Activated CD4-positive, alpha-beta T cell treated with anti-CD3 and anti-CD28 coated beads for 36 hours (primary cell): ENCODE measurements at regions of chr22 and their contacts with region 1.

Region 1: DNA sequence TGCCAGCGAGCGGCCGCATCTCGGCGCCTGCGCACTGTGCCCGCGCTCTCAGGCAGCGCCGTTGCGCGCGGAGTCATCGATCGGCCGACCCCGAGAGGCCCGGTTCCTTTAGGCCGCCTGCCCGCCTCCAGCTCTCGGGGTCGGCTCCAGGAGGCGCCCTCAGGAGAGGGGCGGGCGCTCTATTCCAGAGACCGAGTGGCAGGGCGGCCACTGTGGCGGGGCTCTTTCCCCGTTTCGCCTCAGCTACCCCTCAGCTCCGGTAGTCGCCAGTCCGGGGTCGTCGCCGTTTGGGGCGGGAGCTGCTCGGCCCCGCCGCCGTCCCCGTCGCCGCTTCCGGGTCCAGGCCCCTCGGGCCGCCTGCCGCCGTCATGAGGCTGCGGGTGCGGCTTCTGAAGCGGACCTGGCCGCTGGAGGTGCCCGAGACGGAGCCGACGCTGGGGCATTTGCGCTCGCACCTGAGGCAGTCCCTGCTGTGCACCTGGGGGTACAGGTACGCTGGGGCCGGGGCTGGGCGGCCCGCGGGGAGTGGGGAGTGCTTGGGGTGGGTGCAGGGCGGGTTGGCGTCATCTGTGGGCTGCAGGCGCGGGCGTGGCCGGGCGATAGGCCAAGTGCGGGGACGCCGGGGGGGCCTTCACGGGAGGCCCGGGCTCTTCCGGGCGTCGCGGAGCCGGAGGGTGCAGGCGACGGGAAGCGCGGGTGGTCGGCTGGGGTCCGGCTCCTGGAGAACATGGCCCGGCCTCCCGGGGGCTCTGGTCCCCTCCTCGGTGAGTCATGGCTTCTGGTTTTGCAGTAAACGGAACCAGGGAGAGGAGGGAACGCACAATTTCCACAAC is at the start of gene FBXO7:
- DNase-seq: peak; percentile 93
- ATAC-seq: peak; percentile 83
- H3K4me3 Mint-ChIP-seq: peak within 1 kb of the TSS; percentile 90
- H3K27ac Mint-ChIP-seq: peak within 1 kb of the TSS; percentile 98
- H3K4me1 Mint-ChIP-seq: peaks cover 21% of the 10 kb centered on the region
- H3K27me3 Mint-ChIP-seq: no peaks in the 10 kb centered on the region
- total RNA-seq, gene FBXO7: 81.3 to 85.6 TPM

Region 2: GRCh38 chr22:31943976-31944699 is 530.7 kb before region 1 on chr22 and contains the start of gene YWHAH:
- CTCF ChIA-PET with region 1: no interaction called
- POLR2A ChIA-PET with region 1: no interaction called
- intact Hi-C with region 1: loop called in 1 of 2 experiments (anchors 2 kb)
- DNase-seq: peak; percentile 96
- ATAC-seq: peak; percentile 73
- H3K4me3 Mint-ChIP-seq: no peak within 1 kb of the TSS
- H3K27ac Mint-ChIP-seq: peak within 1 kb of the TSS; percentile 84
- H3K4me1 Mint-ChIP-seq: peaks cover 21% of the 10 kb centered on the region
- H3K27me3 Mint-ChIP-seq: no peaks in the 10 kb centered on the region
- total RNA-seq, gene YWHAH: 83.2 to 98.5 TPM

Region 3: GRCh38 chr22:32050678-32051515 is 424.0 kb before region 1 on chr22:
- CTCF ChIA-PET with region 1: no interaction called
- POLR2A ChIA-PET with region 1: interaction called, 5 read pairs
- intact Hi-C with region 1: loop called in 1 of 2 experiments (anchors 2 kb)
- DNase-seq: peak; percentile 88
- ATAC-seq: peak; percentile 99
- H3K4me3 Mint-ChIP-seq: no peak overlapping the region
- H3K27ac Mint-ChIP-seq: no peak overlapping the region
- H3K4me1 Mint-ChIP-seq: peaks cover 18% of the 10 kb centered on the region
- H3K27me3 Mint-ChIP-seq: peaks cover 53% of the 10 kb centered on the region

Region 4: GRCh38 chr22:32202539-32203180 is 272.2 kb before region 1 on chr22:
- CTCF ChIA-PET with region 1: interaction called, 3 read pairs
- POLR2A ChIA-PET with region 1: no interaction called
- intact Hi-C with region 1: loop called (anchors 1 to 2 kb)
- DNase-seq: peak; percentile 59
- ATAC-seq: peak; percentile 55
- H3K4me3 Mint-ChIP-seq: peak overlapping the region; percentile 63
- H3K27ac Mint-ChIP-seq: no peak overlapping the region
- H3K4me1 Mint-ChIP-seq: peaks cover 21% of the 10 kb centered on the region
- H3K27me3 Mint-ChIP-seq: peaks cover 18% of the 10 kb centered on the region

Region 5: DNA sequence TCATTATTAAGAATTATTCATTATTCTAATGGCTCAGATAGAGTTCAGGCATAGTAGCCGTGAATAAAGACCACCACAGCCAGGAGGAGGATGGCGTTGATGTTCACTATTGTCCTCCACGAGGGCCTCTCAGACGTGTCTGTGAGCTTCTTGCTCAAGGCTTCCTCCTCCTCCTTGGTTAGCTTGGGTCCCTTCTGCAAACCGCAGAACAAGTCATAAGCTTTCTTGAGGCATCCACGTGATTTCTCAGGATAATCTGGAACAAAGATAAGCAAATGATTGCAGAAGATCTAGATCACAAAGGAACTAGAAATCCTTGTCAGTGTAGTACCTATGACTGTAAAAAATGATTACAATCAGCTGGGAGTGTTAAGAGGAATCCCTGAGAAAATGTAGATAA is 256.4 kb before region 1 on chr22:
- CTCF ChIA-PET with region 1: no interaction called
- POLR2A ChIA-PET with region 1: no interaction called
- intact Hi-C with region 1: no loop called
- DNase-seq: no peak
- ATAC-seq: no peak
- H3K4me3 Mint-ChIP-seq: no peak overlapping the region
- H3K27ac Mint-ChIP-seq: no peak overlapping the region
- H3K4me1 Mint-ChIP-seq: no peaks in the 10 kb centered on the region
- H3K27me3 Mint-ChIP-seq: peaks cover 6% of the 10 kb centered on the region

Region 6: DNA sequence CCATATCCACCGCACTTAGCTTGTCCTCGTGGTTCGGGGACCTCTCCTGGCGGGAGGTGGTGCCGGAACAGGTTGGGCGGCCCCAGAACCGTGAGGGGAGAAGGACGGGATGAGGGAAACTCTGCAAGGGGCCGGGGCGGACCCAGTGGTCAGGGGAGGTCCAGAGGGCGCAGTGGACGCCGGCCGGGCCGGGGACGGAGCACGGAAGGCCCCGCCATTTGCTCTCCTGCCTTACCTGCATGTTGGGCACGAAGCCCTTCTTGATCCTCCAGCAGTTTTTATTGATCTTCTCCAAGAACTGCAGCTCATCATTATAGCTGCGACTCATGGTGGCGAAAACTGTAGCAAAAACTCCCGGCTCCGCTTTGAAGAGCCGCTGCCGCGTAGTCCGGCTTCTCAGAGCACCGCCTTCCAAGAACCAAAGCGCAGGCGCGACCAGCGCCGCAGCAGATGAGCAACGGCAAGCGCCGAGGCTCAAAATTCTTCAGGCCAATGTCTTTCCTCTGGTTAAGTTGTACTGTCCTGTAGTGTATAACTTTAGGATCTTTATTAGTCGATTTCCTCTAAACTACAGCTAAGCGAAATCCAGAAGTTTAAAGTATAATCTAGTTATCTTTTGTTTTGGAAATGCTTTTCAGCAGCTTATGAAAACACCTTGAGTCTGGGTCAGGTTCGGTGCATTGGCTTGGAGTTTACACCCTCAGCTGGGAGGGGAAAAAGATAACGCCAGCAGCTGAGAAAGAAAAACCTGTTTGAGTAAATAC is 62.8 kb before region 1 on chr22 and contains the start of gene RTCB:
- CTCF ChIA-PET with region 1: interaction called, 11 read pairs
- POLR2A ChIA-PET with region 1: interaction called, 4 read pairs
- intact Hi-C with region 1: loop called (anchors 1 kb)
- DNase-seq: peak; percentile 95
- ATAC-seq: peak; percentile 83
- H3K4me3 Mint-ChIP-seq: peak within 1 kb of the TSS; percentile 93
- H3K27ac Mint-ChIP-seq: peak within 1 kb of the TSS; percentile 95
- H3K4me1 Mint-ChIP-seq: peaks cover 41% of the 10 kb centered on the region
- H3K27me3 Mint-ChIP-seq: no peaks in the 10 kb centered on the region
- total RNA-seq, gene RTCB: 60.9 to 86.3 TPM